CD14-positive monocyte (primary cell): ENCODE measurements at regions of chr12 and their contacts with region 1.

Region 1: DNA sequence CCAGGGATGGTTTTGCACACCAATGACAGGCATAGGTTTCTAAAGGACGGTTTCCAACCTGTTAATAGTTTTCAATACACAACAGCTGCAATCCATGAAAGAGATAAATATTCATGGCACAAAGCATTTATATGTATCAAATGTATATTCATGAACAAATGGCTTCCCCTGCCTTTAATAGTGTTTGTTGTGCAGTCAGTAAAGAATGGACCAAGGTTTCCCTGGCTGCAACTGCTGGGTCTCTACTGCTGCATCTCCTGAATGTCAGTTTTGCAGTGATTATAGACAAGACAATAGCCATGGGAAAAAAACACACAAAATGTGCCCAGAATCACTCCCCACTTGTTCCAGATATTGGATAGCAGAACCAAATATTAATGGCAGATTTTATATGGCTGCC is 284.1 kb downstream of the BTG1 start:
- DNase-seq: no peak
- H3K4me3 ChIP-seq: no peak overlapping the region
- H3K4me3 Mint-ChIP-seq: no peak overlapping the region
- H3K27ac ChIP-seq: no peak overlapping the region
- H3K27ac Mint-ChIP-seq: no peak overlapping the region
- H3K4me1 ChIP-seq: no peaks in the 10 kb centered on the region
- H3K4me1 Mint-ChIP-seq: no peaks in the 10 kb centered on the region
- H3K27me3 ChIP-seq: no peaks in the 10 kb centered on the region
- H3K27me3 Mint-ChIP-seq: peaks cover 0 to 3% (median 0%) of the 10 kb centered on the region in 3 donors
- CTCF ChIP-seq: no peak

Region 2: GRCh38 chr12:91804533-91804932 is 57.0 kb before region 1 on chr12:
- intact Hi-C with region 1: loop called in 1 of 2 experiments (anchors 5 kb)
- DNase-seq: no peak
- H3K4me3 ChIP-seq: no peak overlapping the region
- H3K4me3 Mint-ChIP-seq: no peak overlapping the region
- H3K27ac ChIP-seq: no peak overlapping the region
- H3K27ac Mint-ChIP-seq: no peak overlapping the region
- H3K4me1 ChIP-seq: no peaks in the 10 kb centered on the region
- H3K4me1 Mint-ChIP-seq: no peaks in the 10 kb centered on the region
- H3K27me3 ChIP-seq: no peaks in the 10 kb centered on the region
- H3K27me3 Mint-ChIP-seq: peaks cover 0 to 3% (median 2%) of the 10 kb centered on the region in 3 donors
- CTCF ChIP-seq: no peak